ENCODE measurements at regions of chr12 and their contacts with region 1.

Region 1: DNA sequence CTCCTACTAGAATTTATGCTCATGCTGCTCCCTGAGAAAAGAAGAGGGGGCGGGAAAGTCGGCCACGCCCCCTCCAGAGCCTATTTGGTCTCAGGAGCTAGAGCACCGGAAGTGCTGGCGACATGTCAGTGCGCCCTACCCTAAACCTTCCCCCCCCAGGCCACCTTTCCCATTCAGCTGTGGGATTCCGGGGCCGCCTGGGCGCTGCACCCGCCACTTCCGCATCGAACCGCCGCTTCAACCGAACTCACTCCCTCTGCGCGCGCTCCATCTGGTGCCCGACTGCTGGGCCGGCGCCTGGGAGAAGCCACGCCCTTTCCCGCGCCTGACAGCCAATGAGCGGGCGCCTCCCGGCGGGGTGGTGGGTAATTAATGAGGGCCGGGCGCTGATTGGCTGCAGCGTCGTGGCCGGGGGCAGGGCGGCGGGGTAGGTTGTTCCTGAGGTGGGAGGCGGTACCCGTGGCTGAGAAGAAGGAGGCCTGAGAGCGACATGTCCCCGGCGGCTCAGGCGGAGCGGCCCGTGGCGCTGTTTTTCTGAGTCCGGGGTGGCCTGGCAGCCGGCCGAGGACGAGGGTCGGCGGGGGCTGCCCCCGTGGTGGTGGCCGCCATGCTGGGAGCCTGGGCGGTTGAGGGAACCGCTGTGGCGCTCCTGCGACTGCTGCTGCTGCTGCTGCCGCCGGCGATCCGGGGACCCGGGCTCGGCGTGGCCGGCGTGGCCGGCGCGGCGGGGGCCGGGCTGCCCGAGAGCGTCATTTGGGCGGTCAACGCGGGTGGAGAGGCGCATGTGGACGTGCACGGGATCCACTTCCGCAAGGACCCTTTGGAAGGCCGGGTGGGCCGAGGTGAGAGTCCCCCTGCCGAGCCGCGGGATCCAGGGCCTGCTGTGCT is at the start of gene MLEC:
- DNase-seq: peak; percentile 85
- ATAC-seq: peak; percentile 91
- H3K4me3 ChIP-seq: peak within 1 kb of the TSS; percentile 78 to 91
- H3K27ac ChIP-seq: peak within 1 kb of the TSS; percentile 96
- H3K4me1 ChIP-seq: peaks cover 24% of the 10 kb centered on the region
- H3K27me3 ChIP-seq: no peaks in the 10 kb centered on the region
- CTCF ChIP-seq: no peak
- total RNA-seq, gene MLEC: 171 TPM

Region 2: GRCh38 chr12:120500581-120500980 is 186.4 kb before region 1 on chr12:
- CTCF ChIA-PET with region 1: no interaction called
- POLR2A ChIA-PET with region 1: interaction called, 10 read pairs
- in situ Hi-C with region 1: no loop called
- intact Hi-C with region 1: no loop called
- DNase-seq: no peak
- ATAC-seq: no peak
- H3K4me3 ChIP-seq: no peak overlapping the region
- H3K27ac ChIP-seq: no peak overlapping the region
- H3K4me1 ChIP-seq: peaks cover 15% of the 10 kb centered on the region
- H3K27me3 ChIP-seq: no peaks in the 10 kb centered on the region
- CTCF ChIP-seq: no peak

Region 3: GRCh38 chr12:120725659-120726509 is 39.0 kb after region 1 on chr12 and contains the start of gene ACADS:
- CTCF ChIA-PET with region 1: interaction called, 10 read pairs
- POLR2A ChIA-PET with region 1: interaction called, 7 read pairs
- in situ Hi-C with region 1: no loop called
- intact Hi-C with region 1: no loop called
- DNase-seq: peak; percentile 22
- ATAC-seq: peak; percentile 99
- H3K4me3 ChIP-seq: peak within 1 kb of the TSS; percentile 71 to 82
- H3K27ac ChIP-seq: peak within 1 kb of the TSS; percentile 90
- H3K4me1 ChIP-seq: peaks cover 8% of the 10 kb centered on the region
- H3K27me3 ChIP-seq: no peaks in the 10 kb centered on the region
- CTCF ChIP-seq: no peak
- total RNA-seq, gene ACADS: 15.9 TPM

Measured in Panc1 (cell line).